ENCODE measurements at regions of chr14 and their contacts with region 1.

Region 1: DNA sequence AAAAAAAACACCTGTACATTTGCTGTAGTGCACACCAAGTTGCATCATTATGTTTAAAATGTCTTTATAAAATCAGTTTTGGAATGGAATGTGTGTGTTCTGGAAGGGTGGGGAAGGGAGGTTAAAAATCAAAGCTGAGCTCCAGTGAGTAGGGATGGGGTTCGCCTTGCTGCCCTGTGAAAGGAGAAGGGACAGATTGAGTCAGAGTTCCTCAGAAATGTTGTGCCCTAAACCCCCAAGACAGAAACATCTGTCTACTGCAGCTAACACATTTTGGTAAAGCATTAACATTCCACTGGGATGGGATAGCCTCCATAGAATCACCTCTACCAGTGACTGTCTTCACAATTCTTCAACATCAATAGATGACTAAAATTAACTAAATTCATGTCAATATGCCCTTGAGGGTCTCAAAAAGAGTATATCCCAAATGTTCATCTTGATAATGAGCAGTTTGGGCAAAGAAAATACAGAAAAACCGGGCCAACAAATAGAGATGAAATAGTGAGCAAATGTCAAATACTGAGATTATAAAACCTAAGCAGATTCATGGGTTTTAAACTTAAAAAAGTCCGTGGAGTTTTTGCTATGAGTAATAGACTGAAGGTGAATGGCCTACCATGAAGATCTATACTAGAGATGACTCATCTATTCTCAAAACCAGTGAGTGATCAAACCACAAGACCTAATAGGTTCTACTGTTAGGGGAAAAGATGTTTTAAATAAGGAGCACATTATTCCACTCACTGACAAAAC is 5.4 kb downstream of the HNRNPC start:
- DNase-seq: peak in 1 of 9 donors; percentile 60
- ATAC-seq: peak; percentile 69
- H3K4me3 ChIP-seq: peak overlapping the region; percentile 5
- H3K4me3 Mint-ChIP-seq: peak overlapping the region; percentile 63 to 99 (median 86)
- H3K27ac ChIP-seq: peak overlapping the region; percentile 28
- H3K27ac Mint-ChIP-seq: peak overlapping the region; percentile 3 to 100 (median 41)
- H3K4me1 ChIP-seq: peaks cover 46 to 56% of the 10 kb centered on the region in 2 donors
- H3K4me1 Mint-ChIP-seq: peaks cover 57 to 80% (median 77%) of the 10 kb centered on the region in 7 donors
- H3K27me3 ChIP-seq: no peaks in the 10 kb centered on the region
- H3K27me3 Mint-ChIP-seq: no peaks in the 10 kb centered on the region

Region 2: DNA sequence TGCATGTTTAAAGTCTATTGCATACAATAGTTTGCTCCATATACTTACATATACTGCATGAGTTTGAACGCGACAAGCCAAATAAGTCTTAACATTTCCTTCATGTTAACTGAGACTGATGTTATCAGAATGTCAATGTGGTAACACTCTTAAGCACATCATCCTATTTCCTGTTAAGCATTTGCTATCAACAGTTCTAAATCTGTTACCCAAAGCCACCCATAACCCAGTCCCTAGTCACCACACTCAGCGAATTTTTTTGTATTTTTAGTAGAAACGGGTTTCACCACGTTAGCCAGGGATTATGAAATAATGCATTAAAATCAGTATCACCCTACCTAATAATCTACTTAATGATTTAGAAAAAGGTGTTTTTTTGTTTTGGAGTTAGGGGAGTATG is 34.0 kb before region 1 on chr14:
- CTCF ChIA-PET with region 1: interaction called, 5 read pairs
- POLR2A ChIA-PET with region 1: interaction called, 12 read pairs
- intact Hi-C with region 1: loop called in 1 of 2 experiments (anchors 2 kb)
- DNase-seq: peak in 7 of 9 donors; percentile 52 to 76 (median 65)
- ATAC-seq: peak; percentile 93
- H3K4me3 ChIP-seq: no peak overlapping the region
- H3K4me3 Mint-ChIP-seq: peak overlapping the region; percentile 27 to 76 (median 66)
- H3K27ac ChIP-seq: peak overlapping the region; percentile 68
- H3K27ac Mint-ChIP-seq: peak overlapping the region; percentile 82 to 94 (median 89)
- H3K4me1 ChIP-seq: peaks cover 48 to 73% of the 10 kb centered on the region in 2 donors
- H3K4me1 Mint-ChIP-seq: peaks cover 44 to 84% (median 74%) of the 10 kb centered on the region in 7 donors
- H3K27me3 ChIP-seq: no peaks in the 10 kb centered on the region
- H3K27me3 Mint-ChIP-seq: no peaks in the 10 kb centered on the region

Region 3: DNA sequence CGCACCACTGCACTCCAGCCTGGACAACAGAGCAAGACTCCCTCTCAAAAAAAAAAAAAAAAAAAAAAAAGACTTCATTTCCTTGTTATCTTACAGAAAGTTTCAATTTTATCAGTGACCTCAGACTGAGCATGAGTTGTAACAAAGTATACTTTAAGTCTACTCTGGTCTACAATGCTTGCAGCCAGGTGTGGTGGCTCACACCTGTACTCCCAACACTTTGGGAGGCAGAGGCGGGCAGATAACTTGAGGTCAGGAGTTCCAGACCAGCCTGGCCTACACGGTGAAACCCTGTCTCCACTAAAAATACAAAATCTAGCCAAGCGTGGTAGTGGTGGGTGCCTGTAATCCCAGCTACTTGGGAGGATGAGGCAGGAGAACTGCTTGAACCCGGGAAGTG is 12.6 kb before region 1 on chr14:
- CTCF ChIA-PET with region 1: interaction called, 3 read pairs
- POLR2A ChIA-PET with region 1: interaction called, 75 read pairs
- intact Hi-C with region 1: loop called in 1 of 2 experiments (anchors 2 kb)
- DNase-seq: no peak
- ATAC-seq: no peak
- H3K4me3 ChIP-seq: no peak overlapping the region
- H3K4me3 Mint-ChIP-seq: peak overlapping the region in 2 of 10 donors; percentile 4 to 19
- H3K27ac ChIP-seq: no peak overlapping the region
- H3K27ac Mint-ChIP-seq: peak overlapping the region in 4 of 9 donors; percentile 43 to 84 (median 64)
- H3K4me1 ChIP-seq: peaks cover 17 to 52% of the 10 kb centered on the region in 2 donors
- H3K4me1 Mint-ChIP-seq: peaks cover 37 to 86% (median 65%) of the 10 kb centered on the region in 7 donors
- H3K27me3 ChIP-seq: no peaks in the 10 kb centered on the region
- H3K27me3 Mint-ChIP-seq: no peaks in the 10 kb centered on the region

Region 4: DNA sequence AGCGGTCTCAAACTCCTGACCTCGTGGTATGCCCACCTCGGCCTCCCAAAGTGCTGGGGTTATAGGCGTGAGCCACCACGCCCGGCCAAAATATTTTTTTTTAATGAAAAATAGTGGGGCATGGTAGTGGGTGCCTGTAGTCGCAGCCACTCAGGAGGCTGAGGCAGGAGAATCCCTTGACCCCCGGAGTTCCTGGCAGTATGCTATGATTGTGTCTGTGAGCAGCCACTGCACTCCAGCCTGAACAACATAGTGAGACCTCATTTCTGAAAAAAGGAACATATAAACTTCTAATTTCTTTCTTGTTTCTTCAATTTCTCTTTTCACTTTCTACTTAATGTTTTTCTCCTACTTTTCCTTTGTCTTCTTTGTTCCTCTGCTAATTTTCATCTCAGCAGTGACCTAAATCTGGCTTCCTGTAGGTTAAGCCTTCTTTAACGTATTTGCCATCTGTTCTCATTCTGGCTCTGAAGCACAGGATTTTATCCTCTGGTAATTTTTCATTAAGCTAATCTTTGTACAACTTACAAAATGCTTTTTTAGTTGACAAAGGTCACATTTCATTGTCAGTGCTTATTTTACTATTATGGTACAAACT is 11.5 kb after region 1 on chr14:
- CTCF ChIA-PET with region 1: interaction called, 3 read pairs
- POLR2A ChIA-PET with region 1: interaction called, 23 read pairs
- intact Hi-C with region 1: no loop called
- DNase-seq: no peak
- ATAC-seq: no peak
- H3K4me3 ChIP-seq: no peak overlapping the region
- H3K4me3 Mint-ChIP-seq: no peak overlapping the region
- H3K27ac ChIP-seq: no peak overlapping the region
- H3K27ac Mint-ChIP-seq: peak overlapping the region in 5 of 9 donors; percentile 28 to 63 (median 56)
- H3K4me1 ChIP-seq: peaks cover 0 to under 1% of the 10 kb centered on the region in 2 donors
- H3K4me1 Mint-ChIP-seq: peaks cover 0 to 5% (median 5%) of the 10 kb centered on the region in 7 donors
- H3K27me3 ChIP-seq: no peaks in the 10 kb centered on the region
- H3K27me3 Mint-ChIP-seq: no peaks in the 10 kb centered on the region

Region 5: DNA sequence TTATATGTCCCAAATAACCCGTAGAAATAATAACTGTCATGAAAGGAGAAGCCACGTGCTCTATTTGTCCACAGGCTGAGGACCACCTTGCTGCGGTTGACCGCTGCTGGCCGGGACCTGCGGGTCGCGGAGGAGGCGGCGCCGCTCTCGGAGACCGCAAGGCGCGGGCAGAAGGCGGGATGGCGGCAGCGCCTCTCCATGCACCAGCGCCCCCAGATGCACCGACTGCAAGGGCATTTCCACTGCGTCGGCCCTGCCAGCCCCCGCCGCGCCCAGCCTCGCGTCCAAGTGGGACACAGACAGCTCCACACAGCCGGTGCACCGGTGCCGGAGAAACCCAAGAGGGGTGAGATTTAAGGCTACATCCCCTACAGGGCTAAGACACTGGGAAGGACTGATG is 37.1 kb after region 1 on chr14:
- CTCF ChIA-PET with region 1: no interaction called
- POLR2A ChIA-PET with region 1: no interaction called
- intact Hi-C with region 1: no loop called
- DNase-seq: peak in 3 of 9 donors; percentile 6 to 12 (median 9)
- ATAC-seq: peak; percentile 52
- H3K4me3 ChIP-seq: peak overlapping the region; percentile 6
- H3K4me3 Mint-ChIP-seq: peak overlapping the region in 7 of 10 donors; percentile 16 to 64 (median 48)
- H3K27ac ChIP-seq: no peak overlapping the region
- H3K27ac Mint-ChIP-seq: no peak overlapping the region
- H3K4me1 ChIP-seq: peaks cover 0 to 5% of the 10 kb centered on the region in 2 donors
- H3K4me1 Mint-ChIP-seq: peaks cover 0 to 8% (median 2%) of the 10 kb centered on the region in 7 donors
- H3K27me3 ChIP-seq: no peaks in the 10 kb centered on the region
- H3K27me3 Mint-ChIP-seq: peaks cover 20 to 38% (median 30%) of the 10 kb centered on the region in 5 donors